ENCODE measurements at regions of chr15 and their contacts with region 1.

Region 1: GRCh38 chr15:91302588-91303439 is 202.8 kb downstream of the SV2B start:
- DNase-seq: peak in 6 of 10 donors; percentile 27 to 85 (median 44)

Region 2: GRCh38 chr15:91018158-91018557 is 284.7 kb before region 1 on chr15:
- intact Hi-C with region 1: no loop called
- DNase-seq: no peak

Region 3: GRCh38 chr15:91237196-91237844 is 65.5 kb before region 1 on chr15:
- intact Hi-C with region 1: no loop called
- DNase-seq: no peak

Region 4: GRCh38 chr15:91357011-91357410 is 54.2 kb after region 1 on chr15:
- intact Hi-C with region 1: no loop called
- DNase-seq: no peak

Region 5: GRCh38 chr15:91384189-91384730 is 81.4 kb after region 1 on chr15:
- intact Hi-C with region 1: no loop called
- DNase-seq: no peak

Region 6: GRCh38 chr15:91522663-91523332 is 220.0 kb after region 1 on chr15:
- intact Hi-C with region 1: loop called (anchors 1 kb)
- DNase-seq: peak in 2 of 10 donors; percentile 41 to 56

Region 7: GRCh38 chr15:91706322-91707032 is 403.7 kb after region 1 on chr15:
- intact Hi-C with region 1: loop called (anchors 10 kb)
- DNase-seq: peak; percentile 53 to 96 (median 83)

Region 8: GRCh38 chr15:91942676-91943576 is 640.1 kb after region 1 on chr15:
- intact Hi-C with region 1: loop called (anchors 10 kb)
- DNase-seq: peak in 3 of 10 donors; percentile 33 to 47 (median 39)

Region 9: GRCh38 chr15:92077353-92078085 is 774.7 kb after region 1 on chr15:
- intact Hi-C with region 1: loop called (anchors 2 kb)
- DNase-seq: peak; percentile 65 to 97 (median 78)

Measured in posterior cingulate gyrus (tissue), 11 donors.